AG04449 (cell line): ENCODE measurements at regions of chr17 and their contacts with region 1.

Region 1: GRCh38 chr17:41548844-41549595 is 20.9 kb upstream of the KRT19 start:
- DNase-seq: peak; percentile 38
- H3K4me3 ChIP-seq: peak overlapping the region; percentile 19
- CTCF ChIP-seq: peak; percentile 99

Region 2: GRCh38 chr17:40810505-40810904 is 738.5 kb before region 1 on chr17:
- CTCF ChIA-PET with region 1: interaction called, 67 read pairs
- POLR2A ChIA-PET with region 1: no interaction called
- DNase-seq: peak; percentile 40
- H3K4me3 ChIP-seq: no peak overlapping the region
- CTCF ChIP-seq: no peak

Region 3: GRCh38 chr17:40915199-40915661 is 633.8 kb before region 1 on chr17:
- CTCF ChIA-PET with region 1: interaction called, 44 read pairs
- POLR2A ChIA-PET with region 1: interaction called, 12 read pairs
- DNase-seq: peak; percentile 94
- H3K4me3 ChIP-seq: no peak overlapping the region
- CTCF ChIP-seq: no peak

Region 4: GRCh38 chr17:41456208-41456607 is 92.8 kb before region 1 on chr17:
- CTCF ChIA-PET with region 1: interaction called, 17 read pairs
- POLR2A ChIA-PET with region 1: interaction called, 3 read pairs
- DNase-seq: no peak
- H3K4me3 ChIP-seq: no peak overlapping the region
- CTCF ChIP-seq: no peak

Region 5: GRCh38 chr17:41532947-41533570 is 16.0 kb before region 1 on chr17:
- CTCF ChIA-PET with region 1: interaction called, 29 read pairs
- POLR2A ChIA-PET with region 1: interaction called, 11 read pairs
- DNase-seq: no peak
- H3K4me3 ChIP-seq: no peak overlapping the region
- CTCF ChIP-seq: no peak

Region 6: GRCh38 chr17:41624208-41625101 is 75.4 kb after region 1 on chr17 and contains the start of gene KRT17:
- CTCF ChIA-PET with region 1: interaction called, 12 read pairs
- POLR2A ChIA-PET with region 1: no interaction called
- DNase-seq: no peak
- H3K4me3 ChIP-seq: no peak within 1 kb of the TSS
- CTCF ChIP-seq: no peak